GM12878 (cell line): ENCODE measurements at regions of chr1 and their contacts with region 1.

Region 1: DNA sequence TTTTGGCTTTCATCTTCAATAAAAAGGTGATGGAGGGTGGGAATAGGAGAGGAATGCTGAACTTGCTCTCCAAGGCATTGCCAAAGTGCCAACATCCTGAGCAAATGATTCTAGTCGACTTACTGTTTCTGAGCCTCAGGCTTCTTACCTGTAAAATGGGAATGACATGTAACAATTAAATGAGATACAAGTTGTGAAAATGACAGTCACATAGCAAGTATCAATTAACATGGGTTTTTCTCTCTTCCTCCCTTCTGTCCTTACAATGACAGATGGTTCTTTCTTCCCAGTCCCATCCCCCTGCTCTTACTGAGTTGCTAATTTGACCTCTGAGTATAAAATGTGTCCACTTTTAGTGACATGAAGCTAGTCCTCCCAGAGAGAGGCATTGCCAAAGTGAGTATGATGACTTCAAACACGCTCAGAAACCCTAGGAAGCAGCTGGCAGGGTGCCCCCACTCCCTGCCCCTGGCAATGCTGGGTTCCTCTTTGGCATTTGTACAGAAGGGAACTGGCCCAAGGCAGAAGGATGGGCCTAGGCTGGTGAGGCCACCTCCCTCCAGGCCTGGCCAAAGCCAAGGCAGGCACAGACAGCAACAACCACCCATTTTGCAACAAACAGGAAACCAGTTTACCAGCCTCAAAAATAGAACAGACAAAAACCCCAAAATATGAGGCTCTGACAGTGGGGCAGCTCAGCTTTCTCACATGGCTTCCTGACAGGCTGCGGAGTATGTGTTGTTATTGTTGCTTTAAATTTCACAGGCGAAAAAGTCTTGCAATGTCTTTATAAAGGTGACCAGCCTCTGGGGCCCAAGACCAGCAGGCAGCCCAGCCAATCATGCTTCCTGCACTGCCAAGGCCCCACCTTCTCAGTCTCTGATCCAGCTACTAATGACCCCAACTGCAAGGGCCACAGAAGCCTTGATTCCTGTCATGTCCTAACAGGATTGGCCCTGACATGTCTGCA is 115.9 kb downstream of the HIVEP3 start:
- DNase-seq: peak; percentile 85
- ATAC-seq: peak; percentile 50
- H3K4me3 ChIP-seq: no peak overlapping the region
- H3K27ac ChIP-seq: peak overlapping the region; percentile 74
- H3K4me1 ChIP-seq: peaks cover 86% of the 10 kb centered on the region
- H3K27me3 ChIP-seq: no peaks in the 10 kb centered on the region
- CTCF ChIP-seq: no peak
- EP300 ChIP-seq: peak in 1 of 2 experiments; percentile 44; a peak in 2 of 4 replicates
- POLR2A ChIP-seq: no peak
- RAD21 ChIP-seq: no peak

Region 2: GRCh38 chr1:41656068-41656467 is 146.7 kb before region 1 on chr1:
- CTCF ChIA-PET with region 1: interaction called, 4 read pairs
- POLR2A ChIA-PET with region 1: no interaction called
- RAD21 ChIA-PET with region 1: interaction called, 11 read pairs
- SMC1A ChIA-PET with region 1: interaction called, 11 read pairs
- in situ Hi-C with region 1: no loop called
- intact Hi-C with region 1: loop called (anchors 5 kb)
- DNase-seq: no peak
- ATAC-seq: peak; percentile 42
- H3K4me3 ChIP-seq: no peak overlapping the region
- H3K27ac ChIP-seq: no peak overlapping the region
- H3K4me1 ChIP-seq: peaks cover 16% of the 10 kb centered on the region
- H3K27me3 ChIP-seq: no peaks in the 10 kb centered on the region
- CTCF ChIP-seq: no peak
- EP300 ChIP-seq: no peak
- POLR2A ChIP-seq: no peak
- RAD21 ChIP-seq: no peak

Region 3: GRCh38 chr1:41789419-41790260 is 13.2 kb before region 1 on chr1:
- CTCF ChIA-PET with region 1: interaction called, 14 read pairs
- POLR2A ChIA-PET with region 1: interaction called, 4 read pairs
- RAD21 ChIA-PET with region 1: interaction called, 8 read pairs
- SMC1A ChIA-PET with region 1: interaction called, 13 read pairs
- in situ Hi-C with region 1: no loop called
- intact Hi-C with region 1: no loop called
- DNase-seq: no peak
- ATAC-seq: no peak
- H3K4me3 ChIP-seq: no peak overlapping the region
- H3K27ac ChIP-seq: no peak overlapping the region
- H3K4me1 ChIP-seq: peaks cover 15% of the 10 kb centered on the region
- H3K27me3 ChIP-seq: no peaks in the 10 kb centered on the region
- CTCF ChIP-seq: no peak
- EP300 ChIP-seq: no peak
- POLR2A ChIP-seq: no peak
- RAD21 ChIP-seq: no peak

Region 4: GRCh38 chr1:41868599-41868998 is 65.8 kb after region 1 on chr1:
- CTCF ChIA-PET with region 1: no interaction called
- POLR2A ChIA-PET with region 1: no interaction called
- RAD21 ChIA-PET with region 1: interaction called, 10 read pairs
- SMC1A ChIA-PET with region 1: no interaction called
- in situ Hi-C with region 1: no loop called
- intact Hi-C with region 1: loop called (anchors 2 kb)
- DNase-seq: peak; percentile 63
- ATAC-seq: peak; percentile 96
- H3K4me3 ChIP-seq: no peak overlapping the region
- H3K27ac ChIP-seq: peak overlapping the region; percentile 27; the same call in 1 of the 2 replicates
- H3K4me1 ChIP-seq: peaks cover 19% of the 10 kb centered on the region
- H3K27me3 ChIP-seq: no peaks in the 10 kb centered on the region
- CTCF ChIP-seq: peak; percentile 60 to 71 (median 66); a peak in 5 of 6 replicates
- EP300 ChIP-seq: no peak
- POLR2A ChIP-seq: no peak
- RAD21 ChIP-seq: peak; percentile 60

Region 5: GRCh38 chr1:42035830-42036604 is 233.2 kb after region 1 on chr1:
- CTCF ChIA-PET with region 1: no interaction called
- POLR2A ChIA-PET with region 1: no interaction called
- RAD21 ChIA-PET with region 1: interaction called, 4 read pairs
- SMC1A ChIA-PET with region 1: no interaction called
- in situ Hi-C with region 1: no loop called
- intact Hi-C with region 1: loop called (anchors 5 kb)
- DNase-seq: peak; percentile 55
- ATAC-seq: peak; percentile 90
- H3K4me3 ChIP-seq: peak overlapping the region; percentile 93
- H3K27ac ChIP-seq: peak overlapping the region; percentile 37; the same call in 1 of the 2 replicates
- H3K4me1 ChIP-seq: peaks cover 8% of the 10 kb centered on the region; the same call in 1 of the 2 replicates
- H3K27me3 ChIP-seq: no peaks in the 10 kb centered on the region; a peak in 1 of 4 replicates
- CTCF ChIP-seq: no peak
- EP300 ChIP-seq: no peak
- POLR2A ChIP-seq: peak; percentile 63; the same call in 1 of the 2 replicates
- RAD21 ChIP-seq: no peak